ENCODE measurements at regions of chr20 and their contacts with region 1.

Region 1: DNA sequence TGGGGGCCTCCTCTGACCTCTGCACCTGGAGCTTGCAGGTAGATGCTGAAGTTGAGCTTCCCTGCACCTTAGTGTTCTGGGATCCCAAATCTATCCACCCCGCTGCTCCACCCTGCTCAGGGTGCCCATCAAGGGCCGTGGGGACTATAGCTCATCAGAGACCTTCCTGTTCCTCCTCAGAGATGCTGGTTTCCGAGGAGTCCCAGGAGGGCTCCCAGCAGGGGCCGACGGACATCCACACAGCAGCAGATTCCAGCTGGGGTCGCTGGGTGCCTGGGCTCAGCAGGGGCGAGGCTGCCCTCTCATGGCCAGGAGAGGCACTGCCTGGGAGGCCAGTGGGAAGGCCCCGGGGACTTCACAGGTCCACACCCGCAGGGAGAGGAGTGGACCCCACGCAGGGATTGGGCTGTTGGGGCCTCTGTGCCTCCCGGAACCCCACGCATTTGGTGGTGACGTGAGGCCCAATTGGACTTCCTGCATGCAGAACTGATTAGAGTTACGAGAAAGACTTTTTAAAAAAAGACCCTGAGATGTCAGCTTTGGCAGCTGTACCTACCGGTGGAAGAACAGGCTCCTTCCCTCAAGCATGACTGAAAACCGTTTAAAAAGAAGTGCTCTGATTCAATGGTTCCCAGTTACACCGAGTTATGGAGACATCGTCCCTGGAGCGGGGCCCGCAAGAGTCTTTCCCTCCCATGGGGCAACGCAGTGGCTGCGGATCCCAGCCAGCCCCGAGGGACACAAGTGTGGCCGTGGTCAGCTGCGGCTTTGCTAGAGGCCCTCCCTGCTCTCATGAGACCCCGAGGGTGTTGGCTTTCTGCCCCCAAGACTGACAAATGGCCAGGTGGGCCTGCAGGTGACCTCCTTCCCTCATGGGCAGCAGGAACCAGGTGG is 25.3 kb upstream of the SLCO4A1 start:
- DNase-seq: peak; percentile 85
- H3K4me3 Mint-ChIP-seq: peak overlapping the region; percentile 52
- H3K27ac Mint-ChIP-seq: peak overlapping the region; percentile 84
- H3K4me1 Mint-ChIP-seq: peaks cover 27% of the 10 kb centered on the region
- H3K27me3 Mint-ChIP-seq: no peaks in the 10 kb centered on the region

Region 2: GRCh38 chr20:62197801-62198200 is 419.2 kb before region 1 on chr20:
- CTCF ChIA-PET with region 1: no interaction called
- intact Hi-C with region 1: no loop called
- DNase-seq: no peak
- H3K4me3 Mint-ChIP-seq: no peak overlapping the region
- H3K27ac Mint-ChIP-seq: no peak overlapping the region
- H3K4me1 Mint-ChIP-seq: no peaks in the 10 kb centered on the region
- H3K27me3 Mint-ChIP-seq: no peaks in the 10 kb centered on the region

Region 3: GRCh38 chr20:62208880-62209755 is 407.9 kb before region 1 on chr20:
- CTCF ChIA-PET with region 1: no interaction called
- intact Hi-C with region 1: no loop called
- DNase-seq: no peak
- H3K4me3 Mint-ChIP-seq: no peak overlapping the region
- H3K27ac Mint-ChIP-seq: no peak overlapping the region
- H3K4me1 Mint-ChIP-seq: no peaks in the 10 kb centered on the region
- H3K27me3 Mint-ChIP-seq: peaks cover 3% of the 10 kb centered on the region

Region 4: DNA sequence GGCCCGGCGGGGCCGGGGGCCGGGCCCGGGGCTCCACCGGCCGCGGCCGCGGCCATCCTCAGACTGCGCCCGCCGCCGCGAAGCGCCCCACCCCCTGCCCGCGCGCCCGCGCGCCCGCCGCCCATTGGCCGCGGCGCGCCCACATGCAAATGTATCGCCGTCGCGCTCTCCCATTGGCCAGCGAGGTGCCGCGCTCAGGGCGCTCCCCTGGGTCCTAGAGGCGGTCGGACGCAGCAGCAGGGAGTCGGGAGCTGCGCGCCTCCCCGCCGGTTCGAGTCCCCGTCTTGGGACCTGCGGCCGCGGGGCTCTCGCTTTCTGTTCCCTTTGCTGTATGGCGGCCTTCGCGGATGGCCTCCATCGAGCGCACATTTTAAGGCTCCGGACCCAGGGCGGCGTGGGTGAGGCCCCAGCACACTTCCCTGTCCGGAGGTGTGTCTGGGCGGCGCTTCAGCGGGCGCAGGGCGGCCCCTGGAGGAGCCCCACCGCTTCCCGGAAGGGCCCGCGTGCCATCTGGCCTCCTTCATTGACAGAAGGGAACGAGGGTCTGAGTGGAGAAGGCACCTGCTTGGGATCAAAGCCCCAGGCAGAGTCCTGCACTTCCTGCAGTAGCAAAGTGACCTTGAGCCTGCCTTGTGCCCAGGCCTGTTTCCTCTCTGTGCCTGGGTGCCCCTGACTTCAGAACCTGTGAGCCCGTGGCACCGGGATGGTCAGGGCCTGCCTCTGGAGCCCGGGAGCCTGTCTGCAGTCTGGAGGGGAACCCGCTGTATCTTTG is 209.6 kb before region 1 on chr20 and contains the start of gene CABLES2:
- CTCF ChIA-PET with region 1: interaction called, 3 read pairs
- intact Hi-C with region 1: loop called (anchors 5 kb)
- DNase-seq: peak; percentile 94
- H3K4me3 Mint-ChIP-seq: peak within 1 kb of the TSS; percentile 78
- H3K27ac Mint-ChIP-seq: peak within 1 kb of the TSS; percentile 80
- H3K4me1 Mint-ChIP-seq: peaks cover 31% of the 10 kb centered on the region
- H3K27me3 Mint-ChIP-seq: no peaks in the 10 kb centered on the region
- total RNA-seq, gene CABLES2: 3.6 to 5.1 TPM

Region 5: DNA sequence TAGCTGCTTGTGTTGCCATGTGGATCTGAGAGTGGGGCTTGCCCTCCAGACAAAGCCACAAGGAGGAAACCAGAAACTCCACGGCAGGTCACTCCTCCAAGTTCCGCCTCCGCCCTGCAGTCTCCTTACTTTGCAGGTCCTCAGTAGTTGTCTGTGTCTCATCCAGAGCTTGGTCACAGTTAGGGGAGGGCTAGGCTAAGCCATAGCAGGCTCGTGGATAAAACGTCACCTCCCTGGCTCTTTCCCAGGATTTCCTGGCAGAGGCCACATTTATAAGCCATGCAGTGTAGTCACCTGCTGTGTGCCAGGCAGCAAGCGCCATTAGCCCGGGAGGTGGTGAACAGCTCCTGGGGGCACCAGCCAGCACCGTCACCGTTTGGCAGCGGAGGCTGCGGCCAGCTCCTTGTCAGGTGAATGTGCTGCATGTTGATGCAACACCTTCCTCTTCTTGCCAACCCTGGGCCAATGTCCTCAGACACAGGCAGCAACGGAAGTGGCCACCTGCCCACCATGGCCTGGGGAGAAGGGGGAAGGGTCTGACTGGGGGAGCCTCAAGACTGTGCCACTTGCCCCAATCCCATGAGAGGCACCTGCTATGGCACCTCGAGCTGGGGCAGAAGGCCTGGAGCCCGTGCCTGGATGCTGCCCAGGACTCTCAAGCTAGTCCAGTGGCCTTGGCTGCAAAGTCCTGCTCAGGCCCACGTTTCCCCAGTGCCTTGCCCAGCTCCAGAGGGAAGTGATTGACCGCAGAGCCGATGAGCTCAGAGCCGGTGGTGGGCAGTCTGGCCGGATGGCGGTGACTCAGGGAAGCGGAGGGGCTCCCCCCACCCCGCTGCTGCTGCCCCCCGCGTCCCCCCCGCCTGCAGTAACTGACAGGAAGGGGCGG is 13.7 kb before region 1 on chr20:
- CTCF ChIA-PET with region 1: interaction called, 9 read pairs
- intact Hi-C with region 1: loop called (anchors 1 kb)
- DNase-seq: peak; percentile 78
- H3K4me3 Mint-ChIP-seq: peak overlapping the region; percentile 51
- H3K27ac Mint-ChIP-seq: peak overlapping the region; percentile 32
- H3K4me1 Mint-ChIP-seq: peaks cover 20% of the 10 kb centered on the region
- H3K27me3 Mint-ChIP-seq: peaks cover 16% of the 10 kb centered on the region

Region 6: DNA sequence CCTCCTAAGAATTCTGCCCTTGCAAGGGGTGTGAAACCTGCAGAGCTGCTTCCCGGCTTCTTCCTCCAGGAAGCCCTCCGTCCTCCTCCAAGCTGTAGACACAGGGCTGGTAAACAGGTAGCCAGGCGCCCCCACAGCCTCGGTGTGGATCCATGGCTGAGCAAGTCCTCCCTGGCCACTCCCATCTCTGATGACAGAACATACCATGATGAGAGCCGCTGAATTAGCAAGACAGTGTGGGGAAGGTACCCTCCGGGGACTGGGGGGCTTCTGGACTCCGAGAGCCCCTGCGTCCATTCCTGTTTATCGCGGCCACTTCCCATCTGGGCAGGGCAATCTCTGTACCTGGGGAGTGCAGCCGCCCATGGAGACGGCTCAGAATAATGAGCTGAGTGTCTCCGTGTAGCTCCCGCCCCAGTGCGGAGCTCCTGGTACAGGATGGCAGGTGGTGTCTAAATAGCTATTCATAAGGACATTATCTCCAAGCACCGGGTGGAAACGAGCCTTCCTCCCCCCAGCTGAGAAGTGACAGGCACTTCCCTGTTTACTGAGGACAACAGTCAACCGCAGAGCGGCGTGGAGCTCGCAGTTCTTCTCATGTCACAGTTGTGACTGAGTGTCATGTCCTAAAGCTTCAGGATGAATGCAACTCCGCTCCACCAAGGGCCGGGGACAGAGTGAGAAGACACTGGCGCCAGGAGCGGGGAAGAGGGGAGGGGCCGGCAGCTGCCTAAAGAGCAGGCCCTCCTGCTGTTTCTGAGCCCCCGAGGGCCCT is 69.0 kb after region 1 on chr20:
- CTCF ChIA-PET with region 1: no interaction called
- intact Hi-C with region 1: no loop called
- DNase-seq: peak; percentile 39
- H3K4me3 Mint-ChIP-seq: no peak overlapping the region
- H3K27ac Mint-ChIP-seq: no peak overlapping the region
- H3K4me1 Mint-ChIP-seq: peaks cover 8% of the 10 kb centered on the region
- H3K27me3 Mint-ChIP-seq: peaks cover 6% of the 10 kb centered on the region

Region 7: DNA sequence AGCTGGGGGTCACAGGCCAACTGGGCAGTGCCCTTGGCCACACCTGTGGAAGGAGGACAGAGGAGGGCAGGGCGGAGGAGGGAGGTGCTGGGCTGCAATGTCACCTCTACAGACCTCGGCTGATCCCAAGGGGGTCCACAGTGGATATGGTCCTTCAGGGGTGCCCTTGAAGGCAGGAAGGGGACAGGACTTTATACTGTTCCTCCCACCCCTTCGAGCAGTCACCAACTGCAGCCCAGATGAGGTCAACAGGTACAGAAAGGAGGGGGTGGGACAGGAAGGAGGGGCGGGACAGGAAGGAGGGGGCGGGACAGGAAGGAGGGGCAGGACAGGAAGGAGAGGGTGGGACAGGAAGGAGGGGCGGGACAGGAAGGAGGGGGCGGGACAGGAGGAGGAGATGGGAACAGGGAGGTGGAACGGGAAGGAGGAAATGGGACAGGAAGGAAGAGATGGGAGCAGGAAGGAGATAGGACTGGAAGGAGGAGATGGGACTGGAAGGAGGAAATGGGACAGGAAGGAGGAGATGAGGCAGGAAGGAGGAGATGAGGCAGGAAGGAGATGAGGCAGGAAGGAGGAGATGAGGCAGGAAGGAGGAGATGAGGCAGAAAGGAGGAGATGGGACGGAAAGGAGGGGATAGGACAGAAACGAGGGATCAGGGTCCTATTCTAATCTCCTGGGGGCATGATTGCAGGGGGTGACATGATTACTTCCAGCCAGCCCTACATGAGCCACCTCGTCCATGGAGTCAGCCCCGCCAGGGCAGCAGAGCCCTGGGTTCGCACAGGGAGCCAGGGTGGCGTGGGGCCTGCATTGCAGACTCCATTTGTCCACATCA is 159.9 kb after region 1 on chr20:
- CTCF ChIA-PET with region 1: no interaction called
- intact Hi-C with region 1: no loop called
- DNase-seq: peak; percentile 89
- H3K4me3 Mint-ChIP-seq: peak overlapping the region; percentile 67
- H3K27ac Mint-ChIP-seq: peak overlapping the region; percentile 92
- H3K4me1 Mint-ChIP-seq: peaks cover 53% of the 10 kb centered on the region
- H3K27me3 Mint-ChIP-seq: no peaks in the 10 kb centered on the region

Measured in activated naive CD4-positive, alpha-beta T cell treated with anti-CD3 and anti-CD28 coated beads for 36 hours (primary cell).